ENCODE measurements at regions of chr11 and their contacts with region 1.

Region 1: GRCh38 chr11:68370211-68371111 is 58.1 kb downstream of the LRP5 start:
- DNase-seq: peak; percentile 89
- ATAC-seq: peak; percentile 91
- H3K4me3 ChIP-seq: peak overlapping the region; percentile 34; the same call in 1 of the 2 replicates
- H3K27ac ChIP-seq: peak overlapping the region; percentile 89
- H3K4me1 ChIP-seq: peaks cover 33% of the 10 kb centered on the region
- H3K27me3 ChIP-seq: no peaks in the 10 kb centered on the region
- CTCF ChIP-seq: no peak
- EP300 ChIP-seq: peak; percentile 86 to 90; a peak in 3 of 4 replicates
- POLR2A ChIP-seq: 0 out of 2 replicates have a peak, but pooled peaks have one; percentile 26
- RAD21 ChIP-seq: 0 out of 2 replicates have a peak, but pooled peaks have one; percentile 13

Region 2: GRCh38 chr11:68312117-68312779 is 58.2 kb before region 1 on chr11 and contains the start of gene LRP5:
- CTCF ChIA-PET with region 1: interaction called, 3 read pairs
- POLR2A ChIA-PET with region 1: no interaction called
- RAD21 ChIA-PET with region 1: interaction called, 3 read pairs
- SMC1A ChIA-PET with region 1: interaction called, 3 read pairs
- in situ Hi-C with region 1: no loop called
- intact Hi-C with region 1: loop called (anchors 2 kb)
- DNase-seq: no peak
- ATAC-seq: peak; percentile 52
- H3K4me3 ChIP-seq: peak within 1 kb of the TSS; percentile 92
- H3K27ac ChIP-seq: peak within 1 kb of the TSS; percentile 36
- H3K4me1 ChIP-seq: peaks cover 6% of the 10 kb centered on the region
- H3K27me3 ChIP-seq: no peaks in the 10 kb centered on the region
- CTCF ChIP-seq: no peak
- EP300 ChIP-seq: no peak
- POLR2A ChIP-seq: 0 out of 2 replicates have a peak, but pooled peaks have one; percentile 27
- RAD21 ChIP-seq: no peak
- polyA plus RNA-seq, gene LRP5: 0.37 to 0.97 TPM

Region 3: GRCh38 chr11:68340784-68341544 is 29.5 kb before region 1 on chr11:
- CTCF ChIA-PET with region 1: no interaction called
- POLR2A ChIA-PET with region 1: interaction called, 4 read pairs
- RAD21 ChIA-PET with region 1: interaction called, 11 read pairs
- SMC1A ChIA-PET with region 1: interaction called, 4 read pairs
- in situ Hi-C with region 1: no loop called
- intact Hi-C with region 1: loop called (anchors 2 kb)
- DNase-seq: peak; percentile 54
- ATAC-seq: peak; percentile 78
- H3K4me3 ChIP-seq: no peak overlapping the region
- H3K27ac ChIP-seq: no peak overlapping the region
- H3K4me1 ChIP-seq: peaks cover 12% of the 10 kb centered on the region
- H3K27me3 ChIP-seq: no peaks in the 10 kb centered on the region
- CTCF ChIP-seq: no peak
- EP300 ChIP-seq: peak; percentile 20 to 66; a peak in 2 of 4 replicates
- POLR2A ChIP-seq: no peak
- RAD21 ChIP-seq: no peak

Region 4: DNA sequence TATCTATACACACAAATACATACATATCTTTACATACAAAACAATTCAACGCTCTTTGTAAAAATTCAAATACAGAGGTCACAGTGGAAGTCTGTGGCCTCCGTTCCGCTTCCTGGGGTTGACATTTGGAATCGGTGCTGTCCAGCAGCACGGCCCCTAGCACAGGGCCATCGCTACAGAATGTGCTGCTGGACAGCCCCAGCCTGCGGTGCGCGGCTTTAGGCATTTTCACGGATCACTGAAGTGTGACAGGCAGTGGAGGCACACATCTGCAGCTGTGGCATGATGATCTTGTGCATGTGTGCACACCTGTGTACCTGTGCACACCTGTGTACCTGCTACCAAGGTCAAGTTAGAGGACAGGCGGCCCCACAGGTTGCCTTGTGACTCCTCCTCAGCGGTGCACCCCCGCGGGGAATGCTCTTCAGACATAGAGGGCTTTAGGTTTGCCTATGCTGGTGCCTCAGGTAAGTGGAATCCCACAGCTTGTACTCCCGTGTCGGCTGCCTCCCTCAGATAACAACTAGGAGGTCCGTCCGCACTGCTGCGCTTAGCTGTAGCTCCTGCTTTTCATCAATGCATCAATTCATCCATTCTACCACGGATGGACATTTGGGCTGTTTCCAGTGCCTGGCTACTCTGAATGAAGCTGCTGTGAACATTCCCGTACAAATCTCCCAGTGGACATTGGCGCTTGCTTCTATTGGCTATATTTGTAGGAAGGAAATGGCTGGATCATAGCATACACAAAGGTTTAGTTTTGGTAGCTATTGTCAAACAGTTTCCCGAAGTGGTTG is 343.8 kb after region 1 on chr11:
- CTCF ChIA-PET with region 1: no interaction called
- POLR2A ChIA-PET with region 1: no interaction called
- RAD21 ChIA-PET with region 1: no interaction called
- SMC1A ChIA-PET with region 1: no interaction called
- in situ Hi-C with region 1: no loop called
- intact Hi-C with region 1: no loop called
- DNase-seq: no peak
- ATAC-seq: no peak
- H3K4me3 ChIP-seq: no peak overlapping the region
- H3K27ac ChIP-seq: no peak overlapping the region
- H3K4me1 ChIP-seq: no peaks in the 10 kb centered on the region
- H3K27me3 ChIP-seq: peaks cover 0 to 2% of the 10 kb centered on the region in 2 experiments; a peak in 2 of 4 replicates
- CTCF ChIP-seq: no peak
- EP300 ChIP-seq: no peak
- POLR2A ChIP-seq: no peak
- RAD21 ChIP-seq: no peak